SK-N-SH (cell line): ENCODE measurements at regions of chr12 and their contacts with region 1.

Region 1: GRCh38 chr12:85029456-85029855 is 6.6 kb downstream of the TSPAN19 start:
- DNase-seq: no peak
- H3K4me3 ChIP-seq: no peak overlapping the region
- H3K27ac ChIP-seq: no peak overlapping the region
- H3K4me1 ChIP-seq: peaks cover 0 to 3% of the 10 kb centered on the region in 2 experiments; a peak in 2 of 4 replicates
- H3K27me3 ChIP-seq: no peaks in the 10 kb centered on the region
- CTCF ChIP-seq: peak; percentile 73
- EP300 ChIP-seq: no peak
- RAD21 ChIP-seq: peak; percentile 77

Region 2: GRCh38 chr12:84862186-84862585 is 167.3 kb before region 1 on chr12:
- CTCF ChIA-PET with region 1: interaction called, 14 read pairs
- POLR2A ChIA-PET with region 1: no interaction called
- DNase-seq: no peak
- H3K4me3 ChIP-seq: no peak overlapping the region
- H3K27ac ChIP-seq: no peak overlapping the region
- H3K4me1 ChIP-seq: peaks cover 0 to 3% of the 10 kb centered on the region in 2 experiments; a peak in 2 of 4 replicates
- H3K27me3 ChIP-seq: no peaks in the 10 kb centered on the region
- CTCF ChIP-seq: no peak
- EP300 ChIP-seq: no peak
- RAD21 ChIP-seq: no peak

Region 3: DNA sequence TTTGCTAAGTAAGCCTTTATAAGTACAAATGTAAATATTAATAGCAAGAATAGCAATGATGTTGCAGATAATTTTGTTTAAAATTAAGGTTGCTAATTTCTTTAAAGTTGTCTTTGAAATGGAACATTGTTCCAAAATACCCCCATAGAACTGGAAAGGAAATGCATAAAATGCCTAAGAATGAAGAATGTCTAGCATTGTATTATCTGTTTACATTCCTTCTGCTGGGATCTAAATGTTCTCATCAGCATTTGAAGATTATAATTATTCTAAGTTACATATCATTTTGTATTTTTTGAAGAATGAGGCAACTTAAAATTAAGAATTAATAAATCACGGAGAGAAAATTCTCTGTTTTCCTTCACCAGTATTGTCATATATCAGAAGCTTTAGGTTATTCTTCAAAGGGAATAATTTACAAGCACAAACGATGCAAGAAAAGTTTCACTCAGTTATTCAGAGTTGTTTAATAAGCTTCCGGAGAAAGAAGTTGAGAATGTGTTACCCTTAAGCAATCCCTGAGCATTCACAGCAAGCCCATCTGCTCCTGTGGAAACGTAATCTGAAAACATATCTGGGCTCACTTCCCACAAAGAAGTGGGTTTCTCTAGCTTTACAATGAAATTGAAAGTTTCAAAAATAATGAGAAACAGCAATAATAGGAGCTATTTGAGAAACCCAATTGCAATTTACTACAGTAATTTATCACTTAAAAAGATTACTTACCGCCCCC is 138.2 kb before region 1 on chr12:
- CTCF ChIA-PET with region 1: interaction called, 25 read pairs
- POLR2A ChIA-PET with region 1: no interaction called
- DNase-seq: no peak
- H3K4me3 ChIP-seq: no peak overlapping the region
- H3K27ac ChIP-seq: no peak overlapping the region
- H3K4me1 ChIP-seq: no peaks in the 10 kb centered on the region
- H3K27me3 ChIP-seq: no peaks in the 10 kb centered on the region
- CTCF ChIP-seq: no peak
- EP300 ChIP-seq: no peak
- RAD21 ChIP-seq: no peak

Region 4: GRCh38 chr12:84912198-84913128 is 117.0 kb before region 1 on chr12 and contains the start of gene SLC6A15:
- CTCF ChIA-PET with region 1: interaction called, 25 read pairs
- POLR2A ChIA-PET with region 1: no interaction called
- DNase-seq: peak; percentile 91
- H3K4me3 ChIP-seq: peak within 1 kb of the TSS; percentile 64 to 75
- H3K27ac ChIP-seq: peak within 1 kb of the TSS; percentile 64 to 84
- H3K4me1 ChIP-seq: peaks cover 0 to 8% of the 10 kb centered on the region in 2 experiments; a peak in 2 of 4 replicates
- H3K27me3 ChIP-seq: no peaks in the 10 kb centered on the region
- CTCF ChIP-seq: peak; percentile 51
- EP300 ChIP-seq: 0 out of 4 replicates have a peak, but pooled peaks of 1 of the 2 experiments have one; percentile 11
- RAD21 ChIP-seq: peak; percentile 12; the same call in 1 of the 2 replicates
- polyA plus RNA-seq, gene SLC6A15: 0.76 and 0.96 TPM in 2 replicates

Region 5: DNA sequence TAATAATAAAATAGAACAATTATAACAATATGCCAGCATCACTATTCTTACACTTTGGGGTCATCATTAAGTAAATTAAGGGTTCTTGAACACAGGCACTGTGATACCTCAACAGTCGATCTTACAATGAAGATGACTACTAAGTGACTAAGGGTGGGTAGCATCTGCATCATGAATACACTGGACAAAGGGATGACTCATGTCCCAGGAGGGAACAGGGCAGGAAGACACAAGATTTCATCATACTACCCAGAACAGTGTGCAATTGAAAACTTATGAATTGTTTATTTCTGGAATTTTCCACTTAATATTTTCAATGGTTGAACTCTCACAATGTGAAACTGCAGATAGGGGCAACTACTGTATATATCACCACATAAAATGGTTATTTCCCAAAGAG is 13.0 kb before region 1 on chr12:
- CTCF ChIA-PET with region 1: interaction called, 16 read pairs
- POLR2A ChIA-PET with region 1: no interaction called
- DNase-seq: no peak
- H3K4me3 ChIP-seq: no peak overlapping the region
- H3K27ac ChIP-seq: peak overlapping the region in 1 of 2 experiments; percentile 46; a peak in 1 of 4 replicates
- H3K4me1 ChIP-seq: peaks cover 0 to 3% of the 10 kb centered on the region in 2 experiments; a peak in 1 of 4 replicates
- H3K27me3 ChIP-seq: no peaks in the 10 kb centered on the region
- CTCF ChIP-seq: no peak
- EP300 ChIP-seq: peak in 1 of 2 experiments; percentile 37; a peak in 1 of 4 replicates
- RAD21 ChIP-seq: no peak

Region 6: DNA sequence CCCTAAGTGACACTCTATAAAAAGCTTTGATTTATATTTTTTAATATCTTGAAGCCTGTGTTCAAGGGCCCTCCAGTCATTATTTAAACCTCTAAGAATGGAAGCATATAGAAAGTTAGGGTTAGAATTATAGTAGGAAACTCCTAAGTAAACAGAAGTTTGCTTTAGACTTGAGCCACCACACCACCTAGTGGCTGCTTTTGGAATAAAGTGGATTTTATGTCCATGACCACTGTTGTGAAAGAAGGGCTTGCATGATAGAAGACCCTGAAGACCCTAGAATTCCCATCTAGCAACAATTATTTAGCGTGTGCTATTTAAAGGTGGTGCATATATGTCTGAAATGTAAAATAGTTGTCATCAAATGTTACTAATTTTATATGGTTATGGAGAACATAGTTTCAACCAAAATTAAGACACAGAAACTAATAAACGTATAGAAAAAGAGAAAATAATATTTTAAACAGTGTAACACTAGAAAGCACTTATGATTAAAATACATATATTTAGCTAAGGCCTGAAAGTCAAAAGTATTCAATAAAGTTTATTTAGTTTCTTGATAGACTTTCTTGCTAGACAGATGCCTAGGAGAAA is 28.0 kb after region 1 on chr12:
- CTCF ChIA-PET with region 1: interaction called, 31 read pairs
- POLR2A ChIA-PET with region 1: no interaction called
- DNase-seq: peak; percentile 33
- H3K4me3 ChIP-seq: no peak overlapping the region
- H3K27ac ChIP-seq: no peak overlapping the region
- H3K4me1 ChIP-seq: no peaks in the 10 kb centered on the region
- H3K27me3 ChIP-seq: no peaks in the 10 kb centered on the region
- CTCF ChIP-seq: peak; percentile 87
- EP300 ChIP-seq: no peak
- RAD21 ChIP-seq: peak; percentile 67